K562 (cell line): ENCODE measurements at regions of chr17 and their contacts with region 1.

Region 1: DNA sequence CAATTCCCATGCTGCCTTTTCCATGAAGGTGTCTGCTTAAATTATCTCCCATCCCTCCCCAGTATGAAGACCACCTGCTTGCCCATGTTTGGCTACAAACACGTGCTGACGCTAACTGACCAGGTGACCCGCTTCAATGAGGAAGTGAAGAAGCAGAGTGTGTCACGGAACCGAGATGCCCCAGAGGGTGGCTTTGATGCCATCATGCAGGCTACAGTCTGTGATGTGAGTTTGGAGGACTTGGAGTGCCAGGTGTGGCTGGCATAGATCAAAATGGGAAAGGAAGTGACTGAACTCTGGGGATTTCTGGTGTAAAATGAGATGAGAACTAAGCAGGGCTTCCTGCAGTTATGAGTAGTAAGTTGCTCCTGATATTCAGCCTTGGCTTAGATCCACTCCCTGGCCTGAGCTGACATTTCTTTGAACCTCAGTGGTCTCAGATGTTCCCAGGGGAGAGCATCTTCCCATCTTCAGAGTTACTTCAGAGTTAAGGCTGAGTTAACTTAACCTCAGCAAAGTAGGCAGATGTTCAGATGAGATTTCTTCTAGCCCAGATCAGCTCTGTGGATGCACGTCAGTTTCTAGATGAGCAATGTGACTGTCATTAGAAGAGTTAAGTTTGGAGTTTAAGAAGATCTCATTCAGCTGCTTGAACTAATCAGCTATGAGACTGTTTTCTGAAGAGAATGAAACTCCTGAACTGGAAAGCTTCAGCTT is 32.7 kb downstream of the ITGB3 start:
- DNase-seq: peak in 1 of 4 experiments; percentile 51
- ATAC-seq: no peak
- H3K4me3 ChIP-seq: no peak overlapping the region
- H3K27ac ChIP-seq: peak overlapping the region; percentile 40; the same call in 2 of the 3 replicates
- H3K4me1 ChIP-seq: peaks cover 35 to 55% of the 10 kb centered on the region in 2 experiments
- H3K27me3 ChIP-seq: no peaks in the 10 kb centered on the region
- CTCF ChIP-seq: no peak
- EP300 ChIP-seq: no peak
- POLR2A ChIP-seq: no peak
- RAD21 ChIP-seq: no peak

Region 2: GRCh38 chr17:47180337-47180736 is 106.0 kb before region 1 on chr17:
- CTCF ChIA-PET with region 1: no interaction called
- POLR2A ChIA-PET with region 1: no interaction called
- in situ Hi-C with region 1: no loop called
- intact Hi-C with region 1: no loop called
- DNase-seq: no peak
- ATAC-seq: no peak
- H3K4me3 ChIP-seq: no peak overlapping the region
- H3K27ac ChIP-seq: no peak overlapping the region
- H3K4me1 ChIP-seq: peaks cover 10 to 22% of the 10 kb centered on the region in 2 experiments; a peak in 4 of 5 replicates
- H3K27me3 ChIP-seq: no peaks in the 10 kb centered on the region
- CTCF ChIP-seq: no peak
- EP300 ChIP-seq: no peak
- POLR2A ChIP-seq: no peak
- RAD21 ChIP-seq: no peak

Region 3: GRCh38 chr17:47297661-47298615 is 11.6 kb after region 1 on chr17:
- CTCF ChIA-PET with region 1: no interaction called
- POLR2A ChIA-PET with region 1: interaction called, 18 read pairs
- in situ Hi-C with region 1: no loop called
- intact Hi-C with region 1: no loop called
- DNase-seq: no peak
- ATAC-seq: no peak
- H3K4me3 ChIP-seq: no peak overlapping the region
- H3K27ac ChIP-seq: no peak overlapping the region
- H3K4me1 ChIP-seq: peaks cover 14 to 20% of the 10 kb centered on the region in 2 experiments
- H3K27me3 ChIP-seq: no peaks in the 10 kb centered on the region
- CTCF ChIP-seq: no peak
- EP300 ChIP-seq: no peak
- POLR2A ChIP-seq: no peak
- RAD21 ChIP-seq: no peak